ENCODE measurements at regions of chr12 and their contacts with region 1.

Region 1: DNA sequence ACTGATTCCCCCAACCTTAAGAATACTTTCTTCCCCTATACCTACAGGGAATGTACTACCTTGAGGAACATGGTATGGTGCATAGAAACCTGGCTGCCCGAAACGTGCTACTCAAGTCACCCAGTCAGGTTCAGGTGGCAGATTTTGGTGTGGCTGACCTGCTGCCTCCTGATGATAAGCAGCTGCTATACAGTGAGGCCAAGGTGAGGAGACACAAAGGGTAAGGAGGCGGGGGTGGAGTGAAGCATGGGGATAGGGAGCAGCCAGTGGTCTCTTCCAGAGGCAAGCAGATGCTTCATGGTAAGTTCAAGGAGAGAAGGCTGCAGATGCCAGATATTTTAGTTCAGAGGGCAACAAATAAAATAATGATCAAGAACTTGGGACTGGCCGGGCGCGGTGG is 6.6 kb upstream of the PA2G4 start:
- DNase-seq: no peak
- H3K4me3 Mint-ChIP-seq: no peak overlapping the region
- H3K27ac Mint-ChIP-seq: peak overlapping the region; percentile 3
- H3K4me1 Mint-ChIP-seq: peaks cover 24% of the 10 kb centered on the region
- H3K27me3 Mint-ChIP-seq: peaks cover 15% of the 10 kb centered on the region

Region 2: GRCh38 chr12:56084958-56085543 is 12.7 kb before region 1 on chr12:
- CTCF ChIA-PET with region 1: interaction called, 10 read pairs
- POLR2A ChIA-PET with region 1: no interaction called
- DNase-seq: peak; percentile 48
- H3K4me3 Mint-ChIP-seq: no peak overlapping the region
- H3K27ac Mint-ChIP-seq: no peak overlapping the region
- H3K4me1 Mint-ChIP-seq: peaks cover 13% of the 10 kb centered on the region
- H3K27me3 Mint-ChIP-seq: peaks cover 30% of the 10 kb centered on the region